Breast epithelium (tissue), 4 donors: ENCODE measurements at regions of chr11 and their contacts with region 1.

Region 1: GRCh38 chr11:36239636-36240035 is 49.6 kb downstream of the COMMD9 start:
- DNase-seq: no peak
- H3K4me3 ChIP-seq: no peak overlapping the region
- H3K27ac ChIP-seq: no peak overlapping the region
- H3K4me1 ChIP-seq: no peaks in the 10 kb centered on the region
- H3K27me3 ChIP-seq: no peaks in the 10 kb centered on the region
- CTCF ChIP-seq: no peak
- POLR2A ChIP-seq: no peak

Region 2: DNA sequence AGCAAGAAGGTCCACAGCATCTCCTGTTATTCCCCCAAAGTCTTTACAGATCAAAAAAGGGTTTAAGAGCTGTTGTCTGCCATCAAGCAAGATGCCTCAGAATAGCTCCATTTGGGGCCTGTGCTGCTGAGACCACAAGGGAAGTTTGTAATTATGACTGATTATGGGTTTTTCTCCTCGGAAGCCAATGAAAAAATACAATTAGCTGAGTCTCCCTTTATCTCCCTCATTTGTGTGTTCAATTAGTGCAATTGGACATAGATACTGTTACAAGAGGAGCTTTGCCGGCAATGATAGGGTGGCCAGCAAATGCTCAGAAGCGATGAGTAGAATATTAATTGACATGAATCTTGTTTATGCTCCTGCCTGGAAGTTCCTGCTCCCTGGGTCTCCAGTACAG is 34.1 kb before region 1 on chr11:
- intact Hi-C with region 1: loop called (anchors 1 kb)
- DNase-seq: no peak
- H3K4me3 ChIP-seq: no peak overlapping the region
- H3K27ac ChIP-seq: no peak overlapping the region
- H3K4me1 ChIP-seq: no peaks in the 10 kb centered on the region
- H3K27me3 ChIP-seq: no peaks in the 10 kb centered on the region
- CTCF ChIP-seq: no peak
- POLR2A ChIP-seq: no peak